Naive thymus-derived CD4-positive, alpha-beta T cell (primary cell): ENCODE measurements at regions of chr17 and their contacts with region 1.

Region 1: DNA sequence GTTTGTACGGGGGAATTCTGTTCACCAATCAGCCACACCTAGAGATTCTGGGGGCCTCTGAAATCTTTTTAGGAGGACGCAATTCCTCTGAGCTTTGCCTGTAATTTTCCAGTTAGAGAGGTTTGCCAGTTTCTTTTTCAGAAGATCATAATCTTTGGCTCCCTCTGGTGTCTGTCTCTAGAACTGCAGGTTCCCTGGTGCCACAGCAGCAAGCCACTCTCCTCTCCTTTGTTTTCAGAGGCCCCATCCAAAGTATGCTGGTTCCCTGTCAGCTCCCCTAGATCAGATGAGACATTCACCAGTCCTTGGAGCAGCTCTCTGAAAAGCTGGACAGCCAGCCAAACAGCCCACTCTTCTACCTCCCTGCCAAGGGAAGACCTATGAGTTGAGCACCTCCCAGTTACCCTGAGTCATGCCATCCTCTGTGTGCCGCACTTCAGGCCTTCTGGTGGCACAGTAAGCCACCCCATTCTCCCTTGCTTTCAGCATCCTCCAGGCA is 36.1 kb downstream of the RNF112 start:
- DNase-seq: peak; percentile 29 to 83 (median 66)
- ATAC-seq: peak; percentile 81
- H3K4me3 ChIP-seq: no peak overlapping the region
- H3K4me3 Mint-ChIP-seq: no peak overlapping the region
- H3K27ac ChIP-seq: no peak overlapping the region
- H3K27ac Mint-ChIP-seq: peak overlapping the region in 2 of 9 donors; percentile 10 to 35
- H3K4me1 ChIP-seq: no peaks in the 10 kb centered on the region
- H3K4me1 Mint-ChIP-seq: peaks cover 0 to 6% (median 4%) of the 10 kb centered on the region in 7 donors
- H3K27me3 ChIP-seq: no peaks in the 10 kb centered on the region
- H3K27me3 Mint-ChIP-seq: peaks cover 9 to 25% (median 14%) of the 10 kb centered on the region in 5 donors

Region 2: GRCh38 chr17:19338031-19338990 is 108.8 kb before region 1 on chr17:
- CTCF ChIA-PET with region 1: interaction called, 8 read pairs
- POLR2A ChIA-PET with region 1: no interaction called
- intact Hi-C with region 1: loop called in 1 of 2 experiments (anchors 1 kb)
- DNase-seq: peak; percentile 47 to 69 (median 63)
- ATAC-seq: peak; percentile 95
- H3K4me3 ChIP-seq: no peak overlapping the region
- H3K4me3 Mint-ChIP-seq: no peak overlapping the region
- H3K27ac ChIP-seq: no peak overlapping the region
- H3K27ac Mint-ChIP-seq: no peak overlapping the region
- H3K4me1 ChIP-seq: no peaks in the 10 kb centered on the region
- H3K4me1 Mint-ChIP-seq: no peaks in the 10 kb centered on the region
- H3K27me3 ChIP-seq: no peaks in the 10 kb centered on the region
- H3K27me3 Mint-ChIP-seq: peaks cover 8 to 39% (median 28%) of the 10 kb centered on the region in 5 donors

Region 3: DNA sequence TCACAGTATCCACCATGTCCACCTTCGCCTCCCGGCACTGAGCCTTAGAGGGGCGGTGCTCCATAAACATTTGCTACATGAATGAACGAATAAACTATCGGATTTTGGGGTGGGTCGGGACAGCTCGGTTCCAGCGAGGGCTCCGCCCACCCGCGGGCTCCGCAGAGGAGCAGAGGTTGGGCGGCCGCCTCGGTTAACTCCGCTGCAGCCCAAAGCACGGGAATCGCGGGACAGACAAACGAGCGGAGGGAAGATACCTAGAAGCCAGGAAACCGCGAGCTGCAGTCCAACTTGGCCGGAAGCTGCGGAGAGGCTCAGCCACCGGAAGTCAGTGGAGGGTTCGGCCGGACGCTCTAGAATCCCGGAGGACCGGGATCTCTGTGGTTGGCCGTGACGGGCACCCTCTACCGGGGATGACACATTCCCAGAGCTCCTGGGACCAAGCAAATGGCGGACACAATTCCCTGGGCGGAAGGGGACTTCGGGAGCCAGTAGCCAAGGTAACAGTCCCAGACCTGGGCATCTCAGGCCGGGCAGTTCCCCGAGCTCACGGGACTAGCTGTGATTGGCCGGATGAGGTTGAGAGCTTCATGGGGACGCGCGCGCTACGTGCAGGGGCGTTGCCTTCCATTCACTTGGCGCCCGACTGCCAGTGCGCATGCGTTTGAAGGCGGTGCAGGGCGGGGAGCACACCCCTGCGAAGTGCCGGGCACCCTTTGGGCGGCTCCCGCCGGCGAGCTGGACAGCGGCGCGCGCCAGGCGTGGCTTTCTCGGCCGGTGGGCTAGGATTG is 69.3 kb before region 1 on chr17:
- CTCF ChIA-PET with region 1: interaction called, 3 read pairs
- POLR2A ChIA-PET with region 1: no interaction called
- intact Hi-C with region 1: loop called (anchors 1 kb)
- DNase-seq: peak; percentile 85 to 95 (median 92)
- ATAC-seq: peak; percentile 89
- H3K4me3 ChIP-seq: peak overlapping the region; percentile 99
- H3K4me3 Mint-ChIP-seq: peak overlapping the region; percentile 83 to 100 (median 97)
- H3K27ac ChIP-seq: peak overlapping the region; percentile 81
- H3K27ac Mint-ChIP-seq: peak overlapping the region; percentile 83 to 99 (median 97)
- H3K4me1 ChIP-seq: peaks cover 2 to 6% of the 10 kb centered on the region in 2 donors
- H3K4me1 Mint-ChIP-seq: peaks cover 6 to 29% (median 20%) of the 10 kb centered on the region in 7 donors
- H3K27me3 ChIP-seq: no peaks in the 10 kb centered on the region
- H3K27me3 Mint-ChIP-seq: no peaks in the 10 kb centered on the region